Motor neuron (in vitro differentiated cells): ENCODE measurements at regions of chr11 and their contacts with region 1.

Region 1: DNA sequence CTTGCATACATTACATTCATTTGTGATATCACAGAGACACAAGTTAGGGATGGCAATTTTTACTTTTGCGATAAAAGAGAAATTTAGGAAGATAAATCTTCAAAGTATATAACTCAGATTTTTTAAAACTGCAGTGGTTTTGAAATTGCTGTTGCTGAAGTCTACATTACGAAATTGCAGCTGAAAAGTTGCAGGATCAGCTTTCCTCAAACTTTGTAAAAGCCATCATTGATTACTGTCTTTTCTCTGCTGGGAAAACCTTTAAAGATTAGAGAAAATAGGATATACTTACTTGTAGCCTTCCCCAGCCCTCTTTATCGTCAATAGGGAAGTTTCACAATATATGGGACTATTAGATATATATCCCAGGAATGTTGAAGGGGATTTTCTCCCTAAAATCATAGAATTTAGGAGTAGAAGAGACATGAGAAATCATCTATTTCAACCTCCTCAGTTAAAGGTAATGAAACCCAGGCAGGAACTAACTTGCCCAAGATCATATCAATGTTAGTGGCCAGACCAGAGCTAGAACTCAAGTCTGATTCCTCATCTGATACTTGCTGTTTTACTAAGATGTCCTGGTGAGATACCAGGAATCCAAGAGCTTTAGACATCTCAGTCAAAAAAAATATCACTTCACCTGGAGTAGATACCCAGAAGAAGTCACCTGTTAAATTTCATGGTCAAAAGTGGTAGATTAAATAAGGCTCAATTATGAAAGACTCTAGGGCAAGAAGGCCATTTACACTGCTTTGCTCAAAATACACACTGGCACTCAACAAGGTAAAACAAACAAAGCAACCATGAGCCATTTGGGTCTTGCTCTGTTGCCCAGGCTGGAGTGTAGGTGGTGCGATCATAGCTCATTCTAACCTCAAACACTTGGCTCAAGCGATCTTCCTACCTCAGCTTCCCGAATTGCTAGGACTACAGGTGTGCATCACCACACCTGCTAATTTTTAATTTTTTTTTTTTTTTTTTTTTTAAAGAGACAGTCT is 10.6 kb upstream of the AGBL2 start:
- ATAC-seq: no peak
- H3K4me3 ChIP-seq: no peak overlapping the region
- H3K27ac ChIP-seq: no peak overlapping the region
- H3K4me1 ChIP-seq: no peaks in the 10 kb centered on the region

Region 2: DNA sequence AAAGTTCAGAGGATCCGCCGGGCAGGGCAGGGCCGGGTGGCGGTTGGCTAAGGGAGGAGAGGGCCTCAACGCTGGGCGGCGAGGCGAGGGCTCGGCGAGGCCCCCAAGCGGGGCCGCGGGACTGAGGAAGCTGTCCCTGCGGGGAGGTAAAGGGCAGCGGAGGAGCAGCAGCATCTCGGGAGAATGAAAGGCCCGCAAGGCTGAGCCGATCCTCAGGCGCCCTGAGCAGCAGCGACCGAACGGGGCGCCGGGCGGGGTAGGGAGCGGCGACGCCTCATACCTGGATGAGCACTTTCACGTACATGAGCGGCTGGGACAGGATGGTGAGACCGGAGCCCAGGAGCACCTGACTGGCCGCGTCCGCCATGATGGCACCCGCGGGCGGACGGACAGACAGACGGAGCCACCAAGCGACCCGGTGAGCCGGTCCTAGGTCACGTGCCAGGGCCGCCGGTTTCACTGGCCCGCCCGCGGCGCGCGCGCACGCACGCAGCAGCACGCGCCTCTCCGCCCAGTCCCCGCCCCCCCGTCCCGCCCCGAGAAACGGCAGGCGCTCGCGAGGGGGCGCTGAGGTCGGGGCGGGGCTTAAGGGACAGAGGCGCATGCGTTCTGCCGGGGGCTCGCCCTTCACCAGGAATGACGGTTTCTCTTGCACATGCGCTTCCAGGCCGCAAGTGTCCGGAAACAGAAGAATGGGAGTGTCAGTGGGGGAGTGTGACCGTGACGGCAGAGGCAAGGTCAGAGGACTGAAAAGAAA is 83.5 kb before region 1 on chr11 and contains the start of gene MTCH2:
- in situ Hi-C with region 1: loop called in 1 of 9 experiments (anchors 25 kb)
- ATAC-seq: peak; percentile 86 to 95 (median 92)
- H3K4me3 ChIP-seq: peak within 1 kb of the TSS; percentile 48 to 72 (median 65)
- H3K27ac ChIP-seq: peak within 1 kb of the TSS; percentile 78 to 88
- H3K4me1 ChIP-seq: peaks cover 5 to 11% of the 10 kb centered on the region in 2 donors
- total RNA-seq, gene MTCH2: 55.8 to 97.7 (median 82.2) TPM

Region 3: GRCh38 chr11:48184446-48184845 is 458.7 kb after region 1 on chr11:
- in situ Hi-C with region 1: no loop called
- ATAC-seq: no peak
- H3K4me3 ChIP-seq: no peak overlapping the region
- H3K27ac ChIP-seq: no peak overlapping the region
- H3K4me1 ChIP-seq: no peaks in the 10 kb centered on the region